Activated CD8-positive, alpha-beta T cell treated with anti-CD3 and anti-CD28 coated beads for 36 hours (primary cell): ENCODE measurements at regions of chr1 and their contacts with region 1.

Region 1: GRCh38 chr1:32200226-32201010 is at the start of gene CCDC28B:
- DNase-seq: peak; percentile 80
- ATAC-seq: peak; percentile 48
- H3K4me3 Mint-ChIP-seq: peak within 1 kb of the TSS; percentile 80
- H3K27ac Mint-ChIP-seq: peak within 1 kb of the TSS; percentile 91
- H3K4me1 Mint-ChIP-seq: peaks cover 57% of the 10 kb centered on the region
- H3K27me3 Mint-ChIP-seq: no peaks in the 10 kb centered on the region
- CTCF ChIP-seq: no peak
- total RNA-seq, gene CCDC28B: 27.0 to 27.7 TPM

Region 2: GRCh38 chr1:32094746-32095521 is 105.5 kb before region 1 on chr1:
- CTCF ChIA-PET with region 1: no interaction called
- POLR2A ChIA-PET with region 1: no interaction called
- intact Hi-C with region 1: no loop called
- DNase-seq: no peak
- ATAC-seq: no peak
- H3K4me3 Mint-ChIP-seq: no peak overlapping the region
- H3K27ac Mint-ChIP-seq: no peak overlapping the region
- H3K4me1 Mint-ChIP-seq: no peaks in the 10 kb centered on the region
- H3K27me3 Mint-ChIP-seq: no peaks in the 10 kb centered on the region
- CTCF ChIP-seq: no peak

Region 3: DNA sequence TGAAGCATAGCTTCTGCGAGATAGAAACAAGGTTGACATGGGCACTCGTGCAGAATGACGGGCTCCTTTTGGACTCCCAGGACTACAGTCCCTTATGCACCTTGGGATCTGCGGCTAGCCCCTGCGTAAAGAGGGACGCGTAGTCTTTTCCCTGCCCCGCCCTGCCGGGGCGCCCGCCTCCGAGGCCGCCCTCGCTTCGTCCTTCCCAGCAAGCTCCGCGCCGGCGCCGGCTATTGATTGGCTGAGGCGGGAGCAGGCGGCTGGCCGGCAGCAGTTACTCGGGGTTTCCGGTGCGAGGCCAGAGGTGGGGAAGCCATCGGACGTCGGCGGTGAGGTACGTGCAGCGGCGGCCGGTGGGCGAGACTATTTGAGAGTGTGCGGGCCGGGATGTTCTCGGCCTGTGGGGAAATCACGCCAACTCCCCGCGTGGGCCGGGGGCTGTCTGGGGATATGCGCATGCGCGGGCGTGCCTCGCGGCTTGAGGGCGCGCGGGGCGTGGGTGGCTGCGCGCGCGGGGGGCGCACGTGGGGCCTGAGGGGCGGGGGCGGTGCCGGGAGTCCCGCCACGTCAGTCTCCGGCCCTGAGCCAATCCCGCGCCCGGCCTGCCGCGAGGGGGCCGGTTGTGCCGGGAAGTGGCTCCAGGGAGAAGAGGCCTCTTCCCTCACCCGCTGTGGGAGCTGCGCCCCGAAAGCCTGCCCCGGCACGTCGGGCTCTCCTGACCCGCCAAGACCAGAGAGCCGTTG is 20.8 kb before region 1 on chr1 and contains the start of gene TXLNA:
- CTCF ChIA-PET with region 1: no interaction called
- POLR2A ChIA-PET with region 1: interaction called, 141 read pairs
- intact Hi-C with region 1: no loop called
- DNase-seq: peak; percentile 94
- ATAC-seq: peak; percentile 92
- H3K4me3 Mint-ChIP-seq: peak within 1 kb of the TSS; percentile 97
- H3K27ac Mint-ChIP-seq: peak within 1 kb of the TSS; percentile 98
- H3K4me1 Mint-ChIP-seq: peaks cover 38% of the 10 kb centered on the region
- H3K27me3 Mint-ChIP-seq: no peaks in the 10 kb centered on the region
- CTCF ChIP-seq: no peak
- total RNA-seq, gene TXLNA: 71.5 to 73.3 TPM

Region 4: GRCh38 chr1:32186077-32186476 is 14.3 kb before region 1 on chr1:
- CTCF ChIA-PET with region 1: no interaction called
- POLR2A ChIA-PET with region 1: interaction called, 141 read pairs
- intact Hi-C with region 1: no loop called
- DNase-seq: no peak
- ATAC-seq: peak; percentile 57
- H3K4me3 Mint-ChIP-seq: peak overlapping the region; percentile 48
- H3K27ac Mint-ChIP-seq: peak overlapping the region; percentile 98
- H3K4me1 Mint-ChIP-seq: peaks cover 45% of the 10 kb centered on the region
- H3K27me3 Mint-ChIP-seq: no peaks in the 10 kb centered on the region
- CTCF ChIP-seq: no peak

Region 5: DNA sequence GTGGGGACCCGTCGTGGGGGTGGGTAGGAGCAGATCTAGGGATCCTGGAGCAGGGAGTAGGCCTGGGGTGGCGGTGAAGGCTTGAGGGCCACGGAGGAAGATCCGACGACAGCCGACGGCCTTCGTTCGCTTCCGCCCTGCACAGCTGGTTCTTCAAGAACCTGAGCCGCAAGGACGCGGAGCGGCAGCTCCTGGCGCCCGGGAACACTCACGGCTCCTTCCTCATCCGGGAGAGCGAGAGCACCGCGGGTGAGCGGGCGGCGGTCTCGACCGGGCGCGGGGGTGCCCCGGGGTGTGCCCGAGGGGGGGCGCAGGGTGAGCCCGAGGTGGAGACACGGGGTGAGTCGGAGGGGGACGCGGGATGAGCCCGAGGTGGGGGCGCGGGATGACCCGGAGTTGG is 75.0 kb after region 1 on chr1:
- CTCF ChIA-PET with region 1: no interaction called
- POLR2A ChIA-PET with region 1: no interaction called
- intact Hi-C with region 1: no loop called
- DNase-seq: no peak
- ATAC-seq: no peak
- H3K4me3 Mint-ChIP-seq: peak overlapping the region; percentile 68
- H3K27ac Mint-ChIP-seq: peak overlapping the region; percentile 89
- H3K4me1 Mint-ChIP-seq: peaks cover 55% of the 10 kb centered on the region
- H3K27me3 Mint-ChIP-seq: no peaks in the 10 kb centered on the region
- CTCF ChIP-seq: no peak